ENCODE measurements at regions of chrX and their contacts with region 1.

Region 1: GRCh38 chrX:112935029-112935428 is 94.4 kb upstream of the AMOT start:
- DNase-seq: no peak

Region 2: GRCh38 chrX:113844976-113845375 is 909.9 kb after region 1 on chrX:
- intact Hi-C with region 1: loop called in 1 of 2 experiments (anchors 5 kb)
- DNase-seq: no peak